ENCODE measurements at regions of chr5 and their contacts with region 1.

Region 1: DNA sequence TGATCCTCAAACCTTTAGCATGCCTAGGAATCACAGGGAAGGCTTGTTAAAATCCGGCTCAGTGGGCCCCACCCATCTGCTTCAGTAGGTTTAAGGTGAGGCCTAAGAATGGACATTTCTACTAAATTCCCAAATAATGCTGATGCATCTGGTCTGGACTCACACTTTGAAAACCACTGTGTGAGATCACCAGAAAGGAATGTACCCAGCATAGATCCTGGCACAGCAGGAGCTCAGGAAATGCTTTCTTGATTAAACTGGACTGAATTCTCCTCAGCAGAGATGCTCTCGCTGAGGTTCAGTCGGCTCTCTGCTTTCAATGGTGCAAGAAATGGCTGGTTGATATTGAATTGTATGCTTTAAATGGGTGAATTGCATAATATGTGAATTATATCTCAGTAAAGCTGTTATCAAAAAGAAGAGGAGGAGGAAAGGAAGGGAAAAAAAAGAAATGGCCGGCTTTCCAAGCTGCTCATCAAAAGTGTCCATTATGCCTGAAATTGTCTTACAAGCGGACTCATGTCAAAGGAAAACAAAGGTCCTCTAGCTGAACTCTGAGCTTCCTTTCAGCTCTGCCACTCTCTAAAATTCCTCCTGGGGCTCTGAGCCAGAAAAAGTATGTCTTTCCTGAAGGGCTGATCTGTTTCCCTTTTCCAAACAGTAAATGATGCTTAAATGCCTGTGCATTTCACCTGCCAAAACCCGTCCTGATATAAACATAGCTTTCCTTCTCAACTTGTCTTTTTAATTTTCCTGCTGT is 77.6 kb upstream of the SAP30L start:
- DNase-seq: peak in 1 of 2 donors; percentile 89
- H3K4me3 ChIP-seq: no peak overlapping the region
- H3K27ac ChIP-seq: peak overlapping the region; percentile 78 to 79
- H3K4me1 ChIP-seq: peaks cover 15 to 54% of the 10 kb centered on the region in 2 donors
- H3K27me3 ChIP-seq: no peaks in the 10 kb centered on the region
- CTCF ChIP-seq: no peak

Region 2: GRCh38 chr5:154221371-154221896 is 146.8 kb before region 1 on chr5:
- intact Hi-C with region 1: loop called (anchors 5 kb)
- DNase-seq: no peak
- H3K4me3 ChIP-seq: no peak overlapping the region
- H3K27ac ChIP-seq: peak overlapping the region; percentile 69 to 70
- H3K4me1 ChIP-seq: peaks cover 12 to 19% of the 10 kb centered on the region in 2 donors
- H3K27me3 ChIP-seq: no peaks in the 10 kb centered on the region
- CTCF ChIP-seq: no peak

Region 3: DNA sequence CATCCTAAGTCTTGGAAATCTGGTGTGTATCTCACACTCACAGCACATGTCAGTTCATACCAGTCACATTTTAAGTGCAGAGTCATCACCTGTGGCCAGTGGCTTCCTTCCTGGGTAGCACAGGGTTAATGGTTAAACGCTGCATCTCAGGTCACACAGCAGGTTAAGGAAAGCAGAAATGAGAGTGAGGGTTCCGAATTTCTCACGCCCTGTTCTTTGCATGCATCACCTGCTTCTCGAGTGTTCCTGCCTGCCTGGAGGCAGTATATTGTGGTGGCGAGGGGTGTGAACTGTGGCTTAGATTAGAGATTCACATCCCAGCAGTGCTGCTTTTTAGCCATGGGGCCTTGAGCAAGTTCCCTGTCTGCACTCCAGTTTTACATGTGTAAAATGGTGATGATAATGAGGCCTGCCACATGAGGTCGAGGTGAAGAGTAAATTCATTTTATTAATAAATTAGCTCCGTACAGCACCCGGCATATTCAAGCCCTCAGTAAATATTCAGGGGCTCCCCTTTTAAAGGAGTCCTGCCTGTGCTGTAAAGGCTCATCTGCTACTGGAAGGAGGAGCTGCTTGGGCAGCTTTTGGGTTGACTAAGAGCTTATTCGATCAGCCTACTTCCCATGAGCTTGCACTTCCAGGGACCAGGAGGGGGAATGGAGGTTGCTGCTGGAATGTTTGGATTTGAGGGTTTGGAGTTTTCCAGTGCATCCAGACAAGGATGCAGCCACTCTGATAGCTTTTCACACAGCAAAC is 16.4 kb after region 1 on chr5:
- intact Hi-C with region 1: no loop called
- DNase-seq: no peak
- H3K4me3 ChIP-seq: no peak overlapping the region
- H3K27ac ChIP-seq: no peak overlapping the region
- H3K4me1 ChIP-seq: no peaks in the 10 kb centered on the region
- H3K27me3 ChIP-seq: no peaks in the 10 kb centered on the region
- CTCF ChIP-seq: no peak

Region 4: GRCh38 chr5:154445422-154446182 is 77.4 kb after region 1 on chr5 and contains the start of gene SAP30L:
- intact Hi-C with region 1: loop called (anchors 1 kb)
- DNase-seq: peak; percentile 96 to 99
- H3K4me3 ChIP-seq: peak within 1 kb of the TSS; percentile 97 to 99
- H3K27ac ChIP-seq: peak within 1 kb of the TSS; percentile 86 to 92
- H3K4me1 ChIP-seq: peaks cover 4 to 24% of the 10 kb centered on the region in 2 donors
- H3K27me3 ChIP-seq: no peaks in the 10 kb centered on the region
- CTCF ChIP-seq: no peak
- total RNA-seq, gene SAP30L: 36.5 TPM

Region 5: DNA sequence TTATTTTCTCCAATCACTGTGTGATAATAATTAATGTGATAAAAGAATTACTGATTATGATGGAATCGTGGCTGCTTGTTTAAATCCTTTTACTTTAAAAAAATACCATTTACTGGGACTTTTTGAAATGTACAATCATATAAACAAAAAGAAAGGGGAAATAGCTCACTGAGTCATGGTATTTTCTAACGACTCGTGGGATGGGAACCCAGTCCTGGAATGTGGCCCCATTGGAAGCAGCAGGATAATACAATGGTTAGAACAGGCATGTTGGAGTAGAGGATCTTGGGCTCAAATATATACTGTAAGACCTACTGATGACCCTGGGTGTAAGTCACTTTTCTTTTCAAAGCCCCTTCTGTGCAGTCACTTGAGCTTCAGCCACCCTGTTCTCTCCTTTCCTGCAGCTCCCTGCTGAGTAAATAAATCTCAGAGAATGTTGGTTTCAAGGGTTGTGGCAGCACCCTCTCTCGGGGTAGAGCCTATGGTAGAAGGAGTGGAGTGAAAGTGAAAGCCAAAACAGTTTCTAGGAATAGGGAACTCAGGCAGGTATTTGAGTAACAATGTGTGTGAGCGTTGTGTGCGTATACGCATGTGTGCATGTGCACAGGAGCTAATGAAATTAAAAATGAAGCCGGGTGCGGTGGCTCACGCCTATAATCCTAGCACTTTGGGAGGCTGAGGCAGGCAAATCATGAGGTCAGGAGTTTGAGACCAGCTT is 346.2 kb after region 1 on chr5:
- intact Hi-C with region 1: no loop called
- DNase-seq: no peak
- H3K4me3 ChIP-seq: peak overlapping the region in 1 of 2 donors; percentile 19
- H3K27ac ChIP-seq: no peak overlapping the region
- H3K4me1 ChIP-seq: peaks cover 6 to 11% of the 10 kb centered on the region in 2 donors
- H3K27me3 ChIP-seq: no peaks in the 10 kb centered on the region
- CTCF ChIP-seq: no peak

Measured in ascending aorta (tissue), 2 donors.